Ascending aorta (tissue), 2 donors: ENCODE measurements at regions of chr2 and their contacts with region 1.

Region 1: GRCh38 chr2:24084386-24085361 is at the start of gene TP53I3:
- DNase-seq: peak; percentile 67 to 92
- H3K4me3 ChIP-seq: peak within 1 kb of the TSS; percentile 63 to 80
- H3K27ac ChIP-seq: peak within 1 kb of the TSS; percentile 77 to 92
- H3K4me1 ChIP-seq: peaks cover 0 to 9% of the 10 kb centered on the region in 2 donors
- H3K27me3 ChIP-seq: no peaks in the 10 kb centered on the region
- CTCF ChIP-seq: peak; percentile 94 to 97 (median 95)
- total RNA-seq, gene TP53I3: 1.6 TPM

Region 2: DNA sequence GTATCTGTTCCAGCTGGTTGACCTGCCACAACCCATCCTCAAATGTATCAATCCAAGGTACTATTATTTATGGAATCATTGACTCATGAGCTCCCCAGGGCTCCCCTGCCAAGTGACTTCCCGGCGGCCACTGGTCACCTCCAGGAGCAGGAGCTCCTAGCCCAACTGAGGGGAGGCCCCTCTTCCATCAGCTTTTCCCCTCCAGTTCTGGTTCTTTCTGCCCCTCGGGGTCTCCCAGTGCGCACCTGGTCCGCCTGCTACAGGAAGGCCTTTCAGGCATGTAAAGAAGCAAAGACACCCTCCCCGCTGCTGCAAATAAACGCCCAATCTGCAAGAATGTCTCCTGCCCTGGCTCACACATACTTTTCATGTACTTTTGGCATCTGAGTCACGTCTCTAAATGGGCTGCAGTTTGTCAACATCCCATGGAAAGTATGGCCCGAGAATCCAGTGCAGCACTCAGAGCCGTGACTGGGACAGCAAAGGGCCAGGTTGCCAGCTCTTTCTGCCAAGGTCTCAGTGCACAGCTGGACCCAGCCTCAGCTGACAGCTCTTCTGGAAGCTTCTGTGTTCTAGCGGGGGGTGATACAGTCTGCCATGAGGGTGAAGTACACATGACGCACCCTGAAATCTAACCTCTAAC is 658.3 kb before region 1 on chr2:
- intact Hi-C with region 1: no loop called
- DNase-seq: peak; percentile 51 to 91
- H3K4me3 ChIP-seq: no peak overlapping the region
- H3K27ac ChIP-seq: peak overlapping the region; percentile 74 to 83
- H3K4me1 ChIP-seq: peaks cover 9 to 21% of the 10 kb centered on the region in 2 donors
- H3K27me3 ChIP-seq: no peaks in the 10 kb centered on the region
- CTCF ChIP-seq: no peak

Region 3: DNA sequence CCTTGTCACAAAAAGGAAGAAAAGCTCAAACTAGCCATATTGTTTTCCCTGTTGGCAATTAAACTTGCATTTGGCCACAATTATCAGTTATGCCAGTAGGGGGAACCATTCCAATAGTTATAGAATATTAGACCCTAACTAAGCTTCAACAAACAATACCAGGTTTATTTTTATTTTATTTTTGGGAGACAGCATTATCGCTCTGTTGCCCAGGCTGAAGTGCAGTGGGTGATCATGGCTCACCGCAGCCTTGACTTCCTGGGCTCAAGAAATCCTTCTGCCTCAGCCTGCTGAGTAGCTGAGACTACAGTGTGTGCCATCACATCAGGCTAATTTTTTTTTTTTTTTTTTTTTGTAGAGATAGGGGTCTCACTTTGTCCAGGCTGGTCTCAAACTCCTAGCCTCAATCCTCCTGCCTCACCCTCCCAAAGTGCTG is 259.9 kb before region 1 on chr2:
- intact Hi-C with region 1: loop called (anchors 5 kb)
- DNase-seq: no peak
- H3K4me3 ChIP-seq: no peak overlapping the region
- H3K27ac ChIP-seq: no peak overlapping the region
- H3K4me1 ChIP-seq: no peaks in the 10 kb centered on the region
- H3K27me3 ChIP-seq: no peaks in the 10 kb centered on the region
- CTCF ChIP-seq: peak; percentile 41 to 65 (median 58)